ENCODE measurements at regions of chr10 and their contacts with region 1.

Region 1: DNA sequence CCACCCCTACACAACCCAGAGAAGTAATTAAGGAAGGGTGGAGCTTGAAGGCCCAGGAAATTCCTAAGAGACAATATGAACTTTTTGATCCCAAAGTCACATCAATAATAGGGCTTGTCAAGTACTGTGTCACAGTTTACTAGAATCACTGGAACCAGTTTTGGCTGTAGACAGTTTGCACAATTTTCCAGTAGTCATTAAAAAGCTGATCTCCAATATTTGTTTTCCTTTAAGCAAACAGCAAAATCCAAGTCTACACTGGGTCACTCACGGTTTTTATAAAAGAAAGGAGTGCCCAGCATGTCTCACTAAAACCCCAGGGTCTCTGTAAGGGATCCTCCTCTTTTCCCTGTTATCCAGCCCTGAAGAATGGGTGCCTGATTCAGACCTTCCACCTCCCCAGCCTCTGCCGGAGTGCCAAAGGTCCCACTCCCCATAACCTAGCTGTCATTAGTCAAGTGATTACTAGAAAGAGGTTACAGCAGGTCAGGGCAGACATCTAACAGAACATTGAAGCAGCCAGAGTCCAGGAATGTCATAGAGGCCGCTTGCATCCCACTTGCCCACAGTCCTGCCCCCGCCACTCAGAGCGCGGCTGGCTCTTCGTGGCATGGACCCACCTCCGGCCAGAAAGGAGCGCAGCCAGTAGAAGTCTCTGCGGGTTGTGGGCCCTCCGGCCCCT is 556 bp downstream of the SLC25A16 start:
- DNase-seq: peak in 1 of 9 donors; percentile 4
- ATAC-seq: no peak
- H3K4me3 ChIP-seq: peak overlapping the region; percentile 91
- H3K4me3 Mint-ChIP-seq: peak overlapping the region; percentile 87 to 94 (median 92)
- H3K27ac ChIP-seq: peak overlapping the region; percentile 96
- H3K27ac Mint-ChIP-seq: peak overlapping the region; percentile 78 to 97 (median 95)
- H3K4me1 ChIP-seq: peaks cover 0 to 5% of the 10 kb centered on the region in 2 donors
- H3K4me1 Mint-ChIP-seq: peaks cover 0 to 20% (median 7%) of the 10 kb centered on the region in 7 donors
- H3K27me3 ChIP-seq: no peaks in the 10 kb centered on the region
- H3K27me3 Mint-ChIP-seq: no peaks in the 10 kb centered on the region

Region 2: GRCh38 chr10:68471586-68472408 is 55.0 kb before region 1 on chr10 and contains the start of gene DNA2:
- CTCF ChIA-PET with region 1: no interaction called
- POLR2A ChIA-PET with region 1: interaction called, 3 read pairs
- intact Hi-C with region 1: loop called (anchors 1 to 2 kb)
- DNase-seq: peak; percentile 54 to 85 (median 67)
- ATAC-seq: peak; percentile 84
- H3K4me3 ChIP-seq: peak within 1 kb of the TSS; percentile 72
- H3K4me3 Mint-ChIP-seq: peak within 1 kb of the TSS; percentile 95 to 100 (median 98)
- H3K27ac ChIP-seq: peak within 1 kb of the TSS; percentile 69
- H3K27ac Mint-ChIP-seq: peak within 1 kb of the TSS; percentile 54 to 99 (median 86)
- H3K4me1 ChIP-seq: peaks cover 0 to 5% of the 10 kb centered on the region in 2 donors
- H3K4me1 Mint-ChIP-seq: peaks cover 6 to 26% (median 14%) of the 10 kb centered on the region in 7 donors
- H3K27me3 ChIP-seq: no peaks in the 10 kb centered on the region
- H3K27me3 Mint-ChIP-seq: no peaks in the 10 kb centered on the region
- total RNA-seq, gene DNA2: 3.8 to 40.2 (median 6.3) TPM

Region 3: DNA sequence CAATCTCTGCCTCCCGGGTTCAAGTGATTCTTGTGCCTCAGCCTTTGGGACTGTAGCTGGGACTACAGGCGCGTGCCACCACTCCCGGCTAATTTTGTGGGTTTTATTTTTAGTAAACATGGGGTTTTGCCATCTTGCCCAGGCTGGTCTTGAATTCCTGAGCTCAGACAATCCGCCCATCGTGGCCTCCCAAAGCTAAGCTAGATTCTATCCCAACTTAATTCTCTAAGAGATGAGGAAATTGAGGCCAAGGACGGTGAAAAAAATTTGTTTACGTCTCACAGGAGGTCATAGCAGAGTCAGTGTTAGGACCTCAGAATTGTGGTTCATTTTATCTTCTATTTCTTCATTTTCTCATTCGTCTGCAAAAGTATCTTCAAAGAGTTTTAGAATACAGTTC is 200.4 kb after region 1 on chr10:
- CTCF ChIA-PET with region 1: no interaction called
- POLR2A ChIA-PET with region 1: no interaction called
- intact Hi-C with region 1: no loop called
- DNase-seq: no peak
- ATAC-seq: no peak
- H3K4me3 ChIP-seq: no peak overlapping the region
- H3K4me3 Mint-ChIP-seq: no peak overlapping the region
- H3K27ac ChIP-seq: no peak overlapping the region
- H3K27ac Mint-ChIP-seq: peak overlapping the region in 1 of 9 donors; percentile 9
- H3K4me1 ChIP-seq: peaks cover 6 to 7% of the 10 kb centered on the region in 2 donors
- H3K4me1 Mint-ChIP-seq: peaks cover 6 to 27% (median 17%) of the 10 kb centered on the region in 7 donors
- H3K27me3 ChIP-seq: no peaks in the 10 kb centered on the region
- H3K27me3 Mint-ChIP-seq: no peaks in the 10 kb centered on the region